ENCODE measurements at regions of chr2 and their contacts with region 1.

Region 1: DNA sequence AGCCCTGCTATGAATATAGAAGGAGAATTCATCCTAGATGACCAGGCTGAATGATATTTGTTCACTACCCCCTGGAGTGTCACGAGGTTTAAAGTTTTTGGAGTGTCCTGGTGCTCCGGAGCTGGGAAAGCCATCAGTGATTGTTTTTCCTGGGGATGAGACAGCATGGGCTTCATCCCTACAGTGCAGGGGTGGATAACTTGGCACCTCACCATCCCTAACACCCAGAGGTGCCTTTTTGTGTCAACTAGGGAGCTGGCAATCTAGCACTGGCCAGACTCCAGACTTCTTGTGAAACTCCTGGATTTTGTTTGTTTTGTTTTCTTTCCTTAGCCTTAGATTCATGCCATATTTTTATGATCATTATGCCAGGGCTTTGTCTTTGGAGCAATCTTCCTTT is 164.8 kb downstream of the PRKCE start:
- DNase-seq: peak; percentile 52
- ATAC-seq: peak; percentile 41
- H3K4me3 ChIP-seq: no peak overlapping the region
- H3K27ac ChIP-seq: no peak overlapping the region
- H3K4me1 ChIP-seq: peaks cover 12% of the 10 kb centered on the region
- H3K27me3 ChIP-seq: no peaks in the 10 kb centered on the region
- CTCF ChIP-seq: no peak
- POLR2A ChIP-seq: no peak
- RAD21 ChIP-seq: no peak

Region 2: DNA sequence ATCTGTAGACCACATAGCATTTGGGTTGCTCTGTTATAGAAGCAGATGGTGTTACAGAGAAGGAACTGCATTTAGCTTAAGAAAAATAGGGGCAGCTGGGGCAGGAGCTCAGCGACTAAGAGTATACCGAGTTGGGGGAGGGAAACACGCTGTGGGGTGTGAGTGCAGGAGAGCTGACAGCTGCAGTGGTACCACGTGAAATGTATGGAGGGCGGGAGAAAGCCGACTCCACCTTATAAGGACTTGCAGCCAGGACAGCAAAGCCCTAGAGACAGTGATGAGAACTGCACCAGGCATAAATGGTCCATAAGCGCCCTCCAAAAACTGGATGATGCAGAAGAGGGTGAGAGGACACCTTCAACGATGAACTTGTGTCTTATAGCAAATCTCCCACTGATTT is 72.8 kb after region 1 on chr2:
- CTCF ChIA-PET with region 1: no interaction called
- POLR2A ChIA-PET with region 1: no interaction called
- dilution Hi-C with region 1: no loop called
- in situ Hi-C with region 1: no loop called
- intact Hi-C with region 1: loop called (anchors 5 kb)
- DNase-seq: peak; percentile 52
- ATAC-seq: peak; percentile 33
- H3K4me3 ChIP-seq: no peak overlapping the region
- H3K27ac ChIP-seq: no peak overlapping the region
- H3K4me1 ChIP-seq: peaks cover 22% of the 10 kb centered on the region
- H3K27me3 ChIP-seq: no peaks in the 10 kb centered on the region
- CTCF ChIP-seq: 0 out of 2 replicates have a peak, but pooled peaks have one; percentile 6
- POLR2A ChIP-seq: no peak
- RAD21 ChIP-seq: no peak

Region 3: DNA sequence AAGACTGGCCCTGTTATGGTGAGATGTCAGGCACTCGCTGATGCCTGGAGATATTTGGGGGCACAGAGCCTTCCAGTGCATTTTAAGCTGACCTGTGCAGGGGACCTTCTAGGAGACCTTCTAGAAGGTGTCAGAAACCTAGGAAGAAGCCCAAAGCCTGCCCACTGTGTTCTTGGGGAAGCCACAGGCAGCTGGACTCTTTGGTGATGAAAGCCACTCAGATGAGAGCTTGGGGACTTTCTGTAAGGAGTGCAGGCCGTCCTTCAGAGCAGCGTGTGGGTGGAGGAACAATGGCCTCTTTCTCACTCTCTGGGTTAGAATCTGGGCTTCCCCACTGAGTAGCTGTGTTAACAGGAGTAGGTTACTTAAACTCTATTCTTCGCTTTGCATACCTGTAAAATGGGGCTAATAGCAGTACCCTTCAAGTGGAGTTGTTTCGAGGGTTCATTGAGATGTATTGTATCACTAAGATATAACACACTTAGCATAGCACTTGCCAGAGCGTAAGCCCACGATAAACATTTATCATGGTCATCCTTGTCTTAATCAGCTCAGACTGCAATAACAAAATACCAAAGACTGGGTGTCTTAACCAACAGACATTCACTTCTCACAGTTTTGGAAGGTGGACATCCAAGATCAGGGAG is 158.6 kb after region 1 on chr2:
- CTCF ChIA-PET with region 1: no interaction called
- POLR2A ChIA-PET with region 1: no interaction called
- dilution Hi-C with region 1: no loop called
- in situ Hi-C with region 1: no loop called
- intact Hi-C with region 1: no loop called
- DNase-seq: no peak
- ATAC-seq: no peak
- H3K4me3 ChIP-seq: no peak overlapping the region
- H3K27ac ChIP-seq: no peak overlapping the region
- H3K4me1 ChIP-seq: no peaks in the 10 kb centered on the region
- H3K27me3 ChIP-seq: no peaks in the 10 kb centered on the region
- CTCF ChIP-seq: no peak
- POLR2A ChIP-seq: no peak
- RAD21 ChIP-seq: no peak

Measured in IMR-90 (cell line).